ENCODE measurements at regions of chr12 and their contacts with region 1.

Region 1: DNA sequence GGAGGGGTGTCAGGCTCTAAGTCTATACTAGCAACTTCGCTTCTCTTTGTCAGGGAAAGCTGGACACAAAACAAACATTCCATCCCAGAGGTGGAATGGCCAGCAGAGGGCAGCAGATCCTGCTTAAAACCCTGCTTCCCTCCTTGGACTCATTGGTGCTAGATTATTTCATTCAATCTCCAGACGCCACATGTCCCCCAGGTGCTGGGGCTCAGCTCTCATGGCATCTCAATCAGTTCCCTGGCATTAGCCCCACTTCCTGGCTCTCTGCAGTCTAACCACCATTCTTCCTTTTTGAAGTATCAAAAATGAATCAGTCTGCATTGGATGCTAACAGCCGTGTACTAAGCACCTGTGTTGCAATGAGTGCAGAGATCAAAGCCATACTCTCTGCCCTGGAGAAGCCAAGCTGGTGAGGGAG is 8.1 kb upstream of the PPP1R1A start:
- DNase-seq: peak; percentile 80
- H3K4me3 Mint-ChIP-seq: no peak overlapping the region
- H3K27ac Mint-ChIP-seq: no peak overlapping the region
- H3K4me1 Mint-ChIP-seq: no peaks in the 10 kb centered on the region
- H3K27me3 Mint-ChIP-seq: peaks cover 27% of the 10 kb centered on the region
- CTCF ChIP-seq: peak; percentile 68

Region 2: DNA sequence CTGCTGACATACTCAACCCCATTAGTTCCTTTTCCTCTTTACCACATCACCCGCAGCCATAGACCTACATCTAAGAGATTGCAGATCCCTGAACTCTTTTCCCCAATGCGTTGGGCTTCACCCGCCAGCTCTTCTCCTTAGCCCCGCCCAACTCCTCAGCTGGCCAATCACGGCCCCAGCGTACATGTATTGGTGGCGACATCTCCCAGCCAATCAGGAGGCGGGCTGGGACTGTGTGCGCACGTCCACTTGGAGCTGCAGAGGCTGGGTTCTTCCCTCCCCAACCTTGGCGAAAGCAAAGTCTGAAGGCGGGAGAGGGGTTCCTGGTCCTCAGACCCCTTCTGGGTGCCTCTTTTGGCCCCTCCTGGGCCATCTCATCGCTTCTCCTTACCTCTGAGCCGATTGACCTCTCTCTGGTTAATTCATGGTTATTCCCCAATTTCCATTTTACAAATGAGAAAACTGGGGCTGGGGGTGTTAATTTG is 36.1 kb before region 1 on chr12:
- CTCF ChIA-PET with region 1: interaction called, 29 read pairs
- POLR2A ChIA-PET with region 1: no interaction called
- intact Hi-C with region 1: no loop called
- DNase-seq: peak; percentile 73
- H3K4me3 Mint-ChIP-seq: peak overlapping the region; percentile 43
- H3K27ac Mint-ChIP-seq: no peak overlapping the region
- H3K4me1 Mint-ChIP-seq: peaks cover 6% of the 10 kb centered on the region
- H3K27me3 Mint-ChIP-seq: peaks cover 41% of the 10 kb centered on the region
- CTCF ChIP-seq: no peak

Region 3: GRCh38 chr12:54616933-54617680 is 20.6 kb after region 1 on chr12:
- CTCF ChIA-PET with region 1: interaction called, 17 read pairs
- POLR2A ChIA-PET with region 1: no interaction called
- intact Hi-C with region 1: no loop called
- DNase-seq: no peak
- H3K4me3 Mint-ChIP-seq: no peak overlapping the region
- H3K27ac Mint-ChIP-seq: no peak overlapping the region
- H3K4me1 Mint-ChIP-seq: peaks cover 5% of the 10 kb centered on the region
- H3K27me3 Mint-ChIP-seq: peaks cover 85% of the 10 kb centered on the region
- CTCF ChIP-seq: no peak

Measured in MCF 10A (cell line).